Right cardiac atrium (tissue), 5 donors: ENCODE measurements at regions of chr17 and their contacts with region 1.

Region 1: DNA sequence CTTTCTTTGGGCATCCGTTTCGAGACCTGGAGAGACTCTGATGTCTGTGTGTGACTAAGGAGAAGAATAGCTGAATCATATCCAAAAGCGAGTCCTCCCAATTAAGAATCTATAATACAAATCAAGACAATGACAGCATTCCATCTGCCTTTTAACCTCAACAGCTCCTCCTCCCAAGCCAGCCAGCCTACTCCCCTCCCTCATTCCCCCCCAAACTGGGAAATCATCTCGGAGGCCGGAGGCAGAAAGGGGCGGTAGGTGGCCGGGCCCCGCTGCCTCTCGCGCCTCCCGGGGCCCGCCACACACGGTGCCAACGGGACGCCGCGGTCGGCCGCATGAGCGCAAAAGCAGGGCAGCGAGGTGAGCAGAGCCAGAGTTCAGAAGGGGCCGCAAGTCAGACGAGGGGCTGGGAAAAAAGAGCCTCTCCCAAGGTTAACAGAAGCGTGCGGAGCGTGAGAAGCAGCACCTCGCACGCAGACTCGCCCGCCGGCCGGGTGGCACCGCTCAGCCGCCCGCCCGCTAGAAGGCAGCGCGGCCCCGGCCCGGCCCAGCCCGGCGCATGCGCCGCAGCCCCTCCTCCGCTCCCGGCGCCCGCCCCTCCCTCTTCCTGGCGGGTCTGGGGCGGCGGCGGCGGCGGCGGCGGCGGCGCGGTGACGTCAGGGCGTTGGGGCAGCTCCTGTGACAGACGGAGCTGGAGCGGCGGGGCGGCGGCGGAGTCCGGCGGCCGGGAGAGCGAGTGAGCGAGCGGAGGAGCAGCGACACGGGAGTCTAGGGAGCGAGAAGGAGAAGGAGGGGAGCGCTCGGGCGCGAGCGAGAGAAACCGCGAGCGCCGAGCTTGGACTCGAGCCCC is at the start of gene PAFAH1B1:
- DNase-seq: peak; percentile 93 to 98 (median 97)
- ATAC-seq: peak; percentile 94 to 95
- H3K4me3 ChIP-seq: peak within 1 kb of the TSS; percentile 98
- H3K27ac ChIP-seq: peak within 1 kb of the TSS; percentile 87
- H3K4me1 ChIP-seq: no peaks in the 10 kb centered on the region
- H3K27me3 ChIP-seq: no peaks in the 10 kb centered on the region
- total RNA-seq, gene PAFAH1B1: 104 to 128 (median 106) TPM

Region 2: DNA sequence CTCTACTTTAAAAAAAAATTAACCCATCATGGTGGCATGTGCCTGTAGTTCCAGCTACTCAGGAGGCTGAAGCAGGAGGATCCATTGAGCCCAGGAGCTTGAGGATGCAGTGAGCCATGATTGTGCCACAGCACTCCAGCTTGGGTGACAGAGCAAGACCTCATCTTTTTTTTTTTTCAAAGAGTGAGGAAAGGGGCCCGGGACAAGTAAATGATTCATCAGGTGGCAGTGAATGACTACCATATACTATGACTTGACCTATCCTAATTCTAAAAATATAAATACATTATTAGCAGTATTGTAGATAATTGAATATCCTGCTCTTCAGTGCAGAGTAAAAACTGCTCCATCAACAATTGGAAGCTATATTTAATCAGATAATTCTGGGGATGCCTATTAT is 63.1 kb after region 1 on chr17:
- intact Hi-C with region 1: loop called in 2 of 4 experiments (anchors 10 kb)
- DNase-seq: no peak
- ATAC-seq: no peak
- H3K4me3 ChIP-seq: no peak overlapping the region
- H3K27ac ChIP-seq: no peak overlapping the region
- H3K4me1 ChIP-seq: peaks cover 1% of the 10 kb centered on the region
- H3K27me3 ChIP-seq: no peaks in the 10 kb centered on the region

Region 3: DNA sequence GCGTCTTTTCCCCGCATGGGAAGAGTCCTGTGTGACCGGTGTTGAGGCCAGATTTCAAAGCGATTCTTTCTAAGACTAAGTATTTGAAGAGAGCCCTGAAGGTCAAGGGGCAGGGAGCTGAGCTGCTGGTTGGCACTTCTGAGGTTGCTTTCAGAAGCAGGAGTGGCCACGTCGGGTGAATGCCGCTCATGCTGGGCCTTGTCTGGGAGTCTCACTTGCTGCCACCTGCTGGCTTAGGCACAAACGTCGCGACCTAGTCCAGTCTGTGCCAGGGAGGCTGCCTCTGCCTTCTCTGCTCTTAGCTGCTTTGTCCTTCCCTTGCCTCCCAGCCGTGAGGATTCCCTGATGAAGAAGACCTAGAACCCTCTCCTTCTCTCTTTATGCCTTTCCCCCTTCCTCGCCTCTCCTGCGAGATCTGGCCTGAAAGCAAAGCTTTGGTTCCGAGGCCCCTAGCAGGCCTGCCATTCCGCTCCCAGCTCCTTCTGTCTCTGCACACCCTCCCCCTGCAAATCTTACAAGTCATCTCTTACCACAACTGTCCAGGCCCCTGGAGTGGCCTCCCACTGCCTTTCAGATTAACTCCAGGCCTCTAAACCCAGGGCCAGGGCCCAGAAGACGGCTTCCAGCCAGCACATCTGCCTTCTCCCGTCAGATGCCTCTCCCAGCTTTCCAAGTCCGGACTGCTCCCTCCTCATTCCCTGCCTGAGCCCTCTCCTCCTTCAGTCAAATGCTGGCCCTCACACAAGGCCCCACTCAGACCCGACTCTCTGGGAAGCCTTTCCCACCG is 1054.8 kb after region 1 on chr17:
- intact Hi-C with region 1: no loop called
- DNase-seq: peak; percentile 45 to 82 (median 75)
- ATAC-seq: peak; percentile 64 to 67
- H3K4me3 ChIP-seq: no peak overlapping the region
- H3K27ac ChIP-seq: no peak overlapping the region
- H3K4me1 ChIP-seq: no peaks in the 10 kb centered on the region
- H3K27me3 ChIP-seq: no peaks in the 10 kb centered on the region